ENCODE measurements at regions of chr13 and their contacts with region 1.

Region 1: DNA sequence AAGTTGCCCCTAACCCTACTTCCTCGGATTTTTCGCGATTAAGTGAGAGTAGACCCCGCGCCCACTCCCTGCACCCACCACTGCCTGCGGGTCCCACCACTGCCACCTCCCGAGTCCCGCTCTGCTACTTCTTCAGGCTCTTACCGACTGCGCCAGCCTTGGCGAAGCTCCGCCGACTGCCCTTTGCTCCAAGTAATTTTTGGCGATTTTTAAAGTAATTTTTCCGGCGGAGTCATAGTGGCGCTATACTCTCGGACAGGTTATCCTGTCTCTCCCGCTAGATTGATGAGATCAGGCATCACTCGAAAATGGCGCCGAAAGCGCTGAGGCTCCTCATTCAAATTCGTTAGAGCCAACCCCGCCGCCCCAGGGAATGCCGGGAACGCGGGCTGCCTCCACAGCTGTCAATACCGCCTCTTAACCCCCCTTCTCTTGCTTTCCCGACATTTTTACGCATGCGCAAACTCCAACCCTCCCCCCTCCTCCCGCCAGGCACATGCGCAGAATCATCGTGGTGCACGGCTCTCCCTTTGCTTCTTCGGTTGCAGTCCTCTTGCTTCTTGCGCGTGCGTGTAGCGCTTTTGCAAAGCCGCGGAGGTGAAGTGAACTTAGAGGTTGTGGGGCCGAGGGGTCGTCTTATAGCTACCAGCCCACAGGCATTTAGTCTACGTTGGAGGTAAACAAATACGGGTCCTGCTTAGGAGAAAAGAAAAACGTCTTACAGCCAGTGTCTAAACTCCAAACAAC is 66.6 kb downstream of the KCNRG start:
- DNase-seq: peak; percentile 91
- H3K4me3 ChIP-seq: peak overlapping the region; percentile 93
- CTCF ChIP-seq: no peak

Region 2: GRCh38 chr13:49996951-49997895 is 84.6 kb before region 1 on chr13 and contains the start of gene TRIM13:
- CTCF ChIA-PET with region 1: interaction called, 21 read pairs
- POLR2A ChIA-PET with region 1: interaction called, 4 read pairs
- DNase-seq: peak; percentile 51
- H3K4me3 ChIP-seq: peak within 1 kb of the TSS; percentile 79
- CTCF ChIP-seq: peak; percentile 79

Region 3: GRCh38 chr13:50106559-50106958 is 24.7 kb after region 1 on chr13:
- CTCF ChIA-PET with region 1: interaction called, 24 read pairs
- POLR2A ChIA-PET with region 1: no interaction called
- DNase-seq: no peak
- H3K4me3 ChIP-seq: no peak overlapping the region
- CTCF ChIP-seq: no peak

Region 4: DNA sequence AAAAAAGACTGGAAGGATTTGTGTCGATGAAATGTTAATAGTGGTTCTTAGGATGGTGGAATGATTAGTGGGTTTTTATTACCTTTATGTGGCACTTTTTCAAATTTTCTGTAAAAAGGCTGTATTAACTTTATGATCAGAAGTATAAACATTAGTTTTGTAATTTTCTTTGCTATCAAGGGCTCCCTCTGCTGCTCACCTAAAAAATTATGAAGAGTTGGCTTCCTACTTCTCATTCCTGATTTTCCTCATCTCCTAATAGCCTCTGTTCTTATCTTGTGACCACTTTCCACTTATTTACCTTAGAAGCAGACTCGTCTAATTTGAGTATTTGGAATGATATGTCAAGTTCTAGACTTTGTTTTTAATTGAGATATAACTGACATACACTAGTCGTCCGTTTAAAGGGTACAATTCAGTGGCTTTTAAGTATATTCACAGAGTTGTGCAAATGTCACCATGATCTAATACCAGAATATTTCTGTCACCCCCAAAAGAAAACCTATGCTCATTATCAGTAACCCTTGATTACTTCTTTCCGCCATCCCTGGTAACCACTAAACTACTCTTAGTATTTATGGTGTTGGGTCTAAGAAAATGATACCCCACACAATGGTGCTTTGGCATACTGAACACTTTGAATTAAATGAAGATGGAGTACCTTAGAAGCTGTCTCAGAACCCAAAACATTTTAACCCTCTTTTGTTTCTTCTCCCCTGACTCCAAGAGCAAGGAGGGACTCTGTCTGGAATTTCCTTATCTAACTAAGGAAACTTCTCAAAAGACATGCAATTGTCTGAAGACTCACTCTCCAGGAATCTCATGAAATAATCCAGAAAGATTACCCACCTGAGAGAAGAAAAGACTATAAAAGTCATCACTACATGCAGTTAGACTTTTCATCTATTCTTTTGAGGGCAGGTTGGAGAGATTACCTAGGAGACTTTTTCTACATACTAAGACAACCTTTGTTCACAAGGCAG is 450.4 kb after region 1 on chr13:
- CTCF ChIA-PET with region 1: interaction called, 13 read pairs
- POLR2A ChIA-PET with region 1: no interaction called
- DNase-seq: no peak
- H3K4me3 ChIP-seq: no peak overlapping the region
- CTCF ChIP-seq: peak; percentile 44

Region 5: GRCh38 chr13:50911937-50912795 is 830.3 kb after region 1 on chr13:
- CTCF ChIA-PET with region 1: interaction called, 30 read pairs
- POLR2A ChIA-PET with region 1: no interaction called
- DNase-seq: peak; percentile 29
- H3K4me3 ChIP-seq: no peak overlapping the region
- CTCF ChIP-seq: peak; percentile 82

Measured in AG04449 (cell line).